ENCODE measurements at regions of chr7 and their contacts with region 1.

Region 1: DNA sequence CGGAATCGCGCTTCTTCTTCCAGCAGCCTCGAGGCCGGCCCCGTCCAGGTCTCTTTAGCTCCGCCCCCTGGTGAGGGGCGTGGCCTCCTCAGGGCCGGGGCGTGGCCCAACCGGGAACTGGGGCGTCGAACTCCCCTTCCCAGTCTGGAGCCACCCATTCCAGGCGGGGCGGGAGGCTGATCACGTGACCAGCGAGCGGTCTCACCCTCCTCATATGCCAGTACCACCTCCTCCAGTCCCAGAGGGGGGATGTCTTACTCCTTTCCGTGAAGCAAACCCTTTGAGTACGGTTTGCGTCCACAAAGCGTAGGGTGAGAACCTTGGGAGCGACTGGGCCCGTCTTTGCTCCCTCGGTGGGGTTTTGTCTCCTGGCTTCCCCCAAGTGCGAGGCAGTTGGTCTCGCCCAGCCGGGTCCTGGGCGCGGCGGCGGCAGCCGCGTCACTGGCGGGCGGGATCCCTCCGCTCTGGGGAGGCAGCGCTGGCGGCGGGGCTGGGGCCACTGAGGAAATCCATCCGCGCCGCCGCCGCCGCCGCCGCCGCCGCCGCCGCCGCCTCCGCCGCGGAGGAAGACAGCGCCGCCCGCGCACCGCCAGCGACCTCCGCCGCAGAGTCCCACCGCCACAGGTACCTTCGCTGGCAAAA is at the start of gene GNB2:
- DNase-seq: peak; percentile 99
- H3K4me3 ChIP-seq: peak within 1 kb of the TSS; percentile 97 to 100 (median 98)
- H3K27ac ChIP-seq: peak within 1 kb of the TSS; percentile 95 to 97
- H3K4me1 ChIP-seq: no peaks in the 10 kb centered on the region
- H3K27me3 ChIP-seq: no peaks in the 10 kb centered on the region
- CTCF ChIP-seq: peak in 1 of 3 donors; percentile 33
- POLR2A ChIP-seq: peak; percentile 41
- total RNA-seq, gene GNB2: 113 to 197 (median 173) TPM

Region 2: GRCh38 chr7:100604028-100604975 is 69.1 kb before region 1 on chr7:
- intact Hi-C with region 1: loop called (anchors 10 kb)
- DNase-seq: peak; percentile 51 to 69
- H3K4me3 ChIP-seq: peak overlapping the region; percentile 63 to 76 (median 69)
- H3K27ac ChIP-seq: peak overlapping the region; percentile 82
- H3K4me1 ChIP-seq: no peaks in the 10 kb centered on the region
- H3K27me3 ChIP-seq: no peaks in the 10 kb centered on the region
- CTCF ChIP-seq: peak; percentile 44 to 61 (median 45)
- POLR2A ChIP-seq: peak; percentile 47

Region 3: DNA sequence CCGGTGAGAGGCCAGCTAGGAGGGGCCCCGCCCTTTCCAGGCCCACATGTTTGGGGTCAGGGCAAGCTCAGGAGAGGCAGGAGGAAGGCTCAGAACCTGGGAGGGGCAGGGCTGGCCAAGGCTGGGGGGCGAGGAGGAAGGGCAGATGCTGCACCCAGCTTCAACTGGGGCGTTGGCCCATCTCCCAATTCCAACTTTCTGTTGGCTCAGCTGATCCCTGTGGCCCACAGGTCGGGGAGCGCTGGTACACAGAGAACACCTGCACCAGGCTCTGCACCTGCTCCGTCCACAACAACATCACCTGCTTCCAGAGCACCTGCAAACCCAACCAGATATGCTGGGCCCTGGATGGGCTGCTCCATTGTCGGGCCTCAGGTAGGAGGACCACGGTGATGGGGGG is 100.1 kb after region 1 on chr7:
- intact Hi-C with region 1: no loop called
- DNase-seq: no peak
- H3K4me3 ChIP-seq: no peak overlapping the region
- H3K27ac ChIP-seq: no peak overlapping the region
- H3K4me1 ChIP-seq: no peaks in the 10 kb centered on the region
- H3K27me3 ChIP-seq: no peaks in the 10 kb centered on the region
- CTCF ChIP-seq: no peak
- POLR2A ChIP-seq: no peak

Measured in breast epithelium (tissue), 4 donors.